ENCODE measurements at regions of chrX and their contacts with region 1.

Region 1: DNA sequence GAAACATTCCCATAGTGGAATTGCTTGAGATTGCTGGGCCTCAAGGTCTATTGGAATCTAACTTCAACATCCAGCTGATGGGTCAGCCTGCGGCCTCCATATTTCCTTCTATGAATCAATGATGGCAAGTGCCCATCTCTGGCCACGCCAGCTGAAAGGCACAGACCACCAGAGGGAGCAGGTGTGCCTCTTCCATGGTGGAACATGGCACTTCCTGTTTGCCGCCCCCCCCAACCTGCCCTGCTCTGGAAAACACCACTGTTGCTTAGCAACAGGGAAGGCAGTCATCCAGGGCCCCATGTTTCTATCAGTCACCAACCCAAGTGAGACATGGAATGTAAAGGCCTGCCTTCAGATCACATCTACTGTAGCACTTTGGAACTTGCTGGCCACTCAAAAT is 11.6 kb downstream of the PAGE4 start:
- H3K4me3 ChIP-seq: no peak overlapping the region
- H3K27ac ChIP-seq: no peak overlapping the region
- H3K4me1 ChIP-seq: no peaks in the 10 kb centered on the region
- CTCF ChIP-seq: 0 out of 2 replicates have a peak, but pooled peaks have one; percentile 15

Region 2: DNA sequence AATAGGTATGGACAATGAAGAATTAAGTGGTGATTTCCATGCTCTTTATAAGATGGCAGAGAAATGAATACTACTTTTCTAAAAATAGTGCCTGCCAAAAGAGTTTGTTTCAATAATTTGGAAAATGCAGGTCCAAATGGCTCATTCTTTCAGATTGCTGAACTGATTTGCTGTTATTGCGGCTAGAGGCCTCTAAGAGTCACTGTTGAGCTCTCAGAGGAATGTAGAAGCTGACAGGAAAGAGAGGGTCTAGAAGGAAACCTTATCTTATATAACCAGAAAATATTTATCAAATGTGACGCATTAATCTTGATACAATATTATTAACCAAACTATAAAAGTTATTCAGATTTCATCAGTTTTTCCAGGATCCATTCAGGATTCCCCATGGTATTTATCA is 79.2 kb before region 1 on chrX:
- CTCF ChIA-PET with region 1: interaction called, 23 read pairs
- POLR2A ChIA-PET with region 1: no interaction called
- H3K4me3 ChIP-seq: no peak overlapping the region
- H3K27ac ChIP-seq: no peak overlapping the region
- H3K4me1 ChIP-seq: no peaks in the 10 kb centered on the region
- CTCF ChIP-seq: no peak

Region 3: GRCh38 chrX:49878834-49879659 is 38.4 kb after region 1 on chrX and contains the start of gene USP27X:
- CTCF ChIA-PET with region 1: interaction called, 18 read pairs
- POLR2A ChIA-PET with region 1: no interaction called
- H3K4me3 ChIP-seq: peak within 1 kb of the TSS; percentile 58
- H3K27ac ChIP-seq: peak within 1 kb of the TSS; percentile 61
- H3K4me1 ChIP-seq: no peaks in the 10 kb centered on the region
- CTCF ChIP-seq: peak; percentile 55; the same call in 1 of the 2 replicates

Region 4: GRCh38 chrX:49922291-49923241 is 81.9 kb after region 1 on chrX and contains the start of gene CLCN5:
- CTCF ChIA-PET with region 1: interaction called, 10 read pairs
- POLR2A ChIA-PET with region 1: interaction called, 3 read pairs
- H3K4me3 ChIP-seq: peak within 1 kb of the TSS; percentile 55
- H3K27ac ChIP-seq: peak within 1 kb of the TSS; percentile 63
- H3K4me1 ChIP-seq: peaks cover 7% of the 10 kb centered on the region
- CTCF ChIP-seq: no peak

Measured in HEK293 (cell line).